ENCODE measurements at regions of chr17 and their contacts with region 1.

Region 1: GRCh38 chr17:40559954-40560591 is 5.2 kb downstream of the CCR7 start:
- DNase-seq: peak; percentile 88
- ATAC-seq: peak; percentile 46
- H3K4me3 ChIP-seq: peak overlapping the region; percentile 34 to 90 (median 83)
- H3K4me3 Mint-ChIP-seq: peak overlapping the region; percentile 92
- H3K27ac ChIP-seq: peak overlapping the region; percentile 90 to 98
- H3K27ac Mint-ChIP-seq: peak overlapping the region; percentile 94
- H3K4me1 ChIP-seq: peaks cover 79 to 99% of the 10 kb centered on the region in 2 donors
- H3K4me1 Mint-ChIP-seq: peaks cover 79% of the 10 kb centered on the region
- H3K27me3 ChIP-seq: no peaks in the 10 kb centered on the region
- H3K27me3 Mint-ChIP-seq: no peaks in the 10 kb centered on the region
- CTCF ChIP-seq: peak; percentile 97

Region 2: GRCh38 chr17:40362696-40363110 is 197.4 kb before region 1 on chr17:
- CTCF ChIA-PET with region 1: interaction called, 12 read pairs
- POLR2A ChIA-PET with region 1: interaction called, 3 read pairs
- intact Hi-C with region 1: loop called (anchors 1 kb)
- DNase-seq: peak; percentile 86
- ATAC-seq: peak; percentile 80
- H3K4me3 ChIP-seq: peak overlapping the region in 4 of 5 experiments; percentile 28 to 58 (median 52)
- H3K4me3 Mint-ChIP-seq: peak overlapping the region; percentile 85
- H3K27ac ChIP-seq: no peak overlapping the region
- H3K27ac Mint-ChIP-seq: peak overlapping the region; percentile 34
- H3K4me1 ChIP-seq: peaks cover 15 to 17% of the 10 kb centered on the region in 2 donors
- H3K4me1 Mint-ChIP-seq: peaks cover 12% of the 10 kb centered on the region
- H3K27me3 ChIP-seq: peaks cover 0 to 34% (median 8%) of the 10 kb centered on the region in 4 experiments
- H3K27me3 Mint-ChIP-seq: peaks cover 12% of the 10 kb centered on the region
- CTCF ChIP-seq: peak; percentile 70

Region 3: GRCh38 chr17:40443583-40444327 is 116.3 kb before region 1 on chr17:
- CTCF ChIA-PET with region 1: interaction called, 49 read pairs
- POLR2A ChIA-PET with region 1: interaction called, 5 read pairs
- intact Hi-C with region 1: loop called (anchors 1 kb)
- DNase-seq: peak; percentile 83
- ATAC-seq: peak; percentile 80
- H3K4me3 ChIP-seq: peak overlapping the region; percentile 28 to 66 (median 48)
- H3K4me3 Mint-ChIP-seq: peak overlapping the region; percentile 88
- H3K27ac ChIP-seq: peak overlapping the region in 1 of 2 donors; percentile 62
- H3K27ac Mint-ChIP-seq: peak overlapping the region; percentile 84
- H3K4me1 ChIP-seq: peaks cover 29 to 44% of the 10 kb centered on the region in 2 donors
- H3K4me1 Mint-ChIP-seq: peaks cover 46% of the 10 kb centered on the region
- H3K27me3 ChIP-seq: peaks cover 0 to 6% (median 0%) of the 10 kb centered on the region in 4 experiments
- H3K27me3 Mint-ChIP-seq: no peaks in the 10 kb centered on the region
- CTCF ChIP-seq: peak; percentile 47

Region 4: DNA sequence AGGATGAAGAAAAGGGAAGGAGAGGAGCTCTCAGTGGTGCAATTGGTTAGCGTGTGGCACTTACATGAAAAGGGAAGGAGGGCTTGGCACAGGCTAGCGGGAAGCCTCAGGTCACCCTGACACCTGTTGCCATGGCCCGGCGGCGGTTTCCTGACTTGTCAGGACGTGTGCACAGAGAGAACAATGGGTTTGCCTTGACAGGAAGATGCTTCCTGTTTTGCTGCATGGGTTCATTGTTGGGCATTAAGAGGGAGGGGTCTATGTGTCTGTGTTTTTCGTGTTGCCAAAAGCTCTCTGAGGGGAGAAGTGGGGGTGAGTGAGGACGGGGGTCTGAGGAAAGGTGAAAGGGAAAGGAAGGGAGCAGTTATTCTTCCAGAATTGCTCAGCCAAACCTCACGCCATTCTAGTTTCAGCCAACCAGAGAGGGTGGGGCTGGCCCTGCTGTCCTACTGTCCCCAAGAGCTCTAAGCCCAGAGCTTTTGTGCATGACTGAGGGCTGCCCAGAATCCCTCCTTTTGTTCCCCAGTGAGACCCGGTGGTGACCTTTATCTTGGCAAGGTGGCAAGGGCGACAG is 22.3 kb after region 1 on chr17:
- CTCF ChIA-PET with region 1: interaction called, 51 read pairs
- POLR2A ChIA-PET with region 1: interaction called, 11 read pairs
- intact Hi-C with region 1: loop called (anchors 1 kb)
- DNase-seq: peak; percentile 84
- ATAC-seq: peak; percentile 76
- H3K4me3 ChIP-seq: peak overlapping the region in 3 of 5 experiments; percentile 15 to 52 (median 40)
- H3K4me3 Mint-ChIP-seq: peak overlapping the region; percentile 68
- H3K27ac ChIP-seq: peak overlapping the region; percentile 85 to 87
- H3K27ac Mint-ChIP-seq: peak overlapping the region; percentile 77
- H3K4me1 ChIP-seq: peaks cover 66 to 68% of the 10 kb centered on the region in 2 donors
- H3K4me1 Mint-ChIP-seq: peaks cover 83% of the 10 kb centered on the region
- H3K27me3 ChIP-seq: no peaks in the 10 kb centered on the region
- H3K27me3 Mint-ChIP-seq: no peaks in the 10 kb centered on the region
- CTCF ChIP-seq: no peak

Region 5: GRCh38 chr17:40647624-40648383 is 87.7 kb after region 1 on chr17 and contains the start of gene SMARCE1:
- CTCF ChIA-PET with region 1: interaction called, 6 read pairs
- POLR2A ChIA-PET with region 1: interaction called, 5 read pairs
- intact Hi-C with region 1: loop called (anchors 1 kb)
- DNase-seq: peak; percentile 94
- ATAC-seq: peak; percentile 85
- H3K4me3 ChIP-seq: peak within 1 kb of the TSS; percentile 85 to 94 (median 86)
- H3K4me3 Mint-ChIP-seq: peak within 1 kb of the TSS; percentile 89
- H3K27ac ChIP-seq: peak within 1 kb of the TSS; percentile 97 to 100
- H3K27ac Mint-ChIP-seq: peak within 1 kb of the TSS; percentile 94
- H3K4me1 ChIP-seq: peaks cover 25 to 30% of the 10 kb centered on the region in 2 donors
- H3K4me1 Mint-ChIP-seq: peaks cover 38% of the 10 kb centered on the region
- H3K27me3 ChIP-seq: no peaks in the 10 kb centered on the region
- H3K27me3 Mint-ChIP-seq: no peaks in the 10 kb centered on the region
- CTCF ChIP-seq: no peak
- total RNA-seq, gene SMARCE1: 123 and 128 TPM in 2 replicates

Region 6: DNA sequence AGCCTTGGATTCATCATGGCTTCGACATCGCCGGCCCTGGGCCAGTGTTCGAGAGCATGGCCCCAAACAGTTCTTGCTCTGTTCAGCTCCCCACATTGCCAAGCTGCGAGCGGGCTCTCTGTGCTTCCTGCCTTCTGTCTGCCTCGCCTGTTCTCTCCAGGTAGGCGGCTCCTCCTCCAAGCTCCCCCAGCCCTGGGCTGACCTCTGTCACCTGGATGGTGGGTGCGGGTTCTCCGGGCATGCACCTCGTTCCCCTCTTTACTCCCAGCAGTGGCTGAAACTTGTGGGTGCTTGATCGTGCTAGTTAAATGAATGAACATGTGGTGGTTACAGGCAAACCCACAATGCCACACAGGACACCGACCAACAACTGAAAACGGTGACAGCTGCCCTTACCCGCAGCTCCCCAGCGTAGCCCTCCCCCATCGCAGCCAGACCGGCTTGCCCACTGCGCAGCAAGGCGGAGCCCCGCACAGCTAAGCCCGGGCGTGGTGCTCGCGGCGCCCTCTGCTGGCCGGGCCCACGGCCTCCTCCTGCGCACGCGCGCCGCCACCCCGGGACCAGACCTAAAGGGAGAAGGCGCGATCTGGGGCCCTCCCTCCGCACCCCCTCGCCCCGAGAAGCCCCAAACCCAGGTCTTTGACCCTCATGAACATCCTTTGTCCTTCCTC is 1105.6 kb after region 1 on chr17:
- CTCF ChIA-PET with region 1: interaction called, 8 read pairs
- POLR2A ChIA-PET with region 1: interaction called, 5 read pairs
- intact Hi-C with region 1: loop called (anchors 5 kb)
- DNase-seq: peak; percentile 96
- ATAC-seq: peak; percentile 72
- H3K4me3 ChIP-seq: peak overlapping the region; percentile 30 to 89 (median 62)
- H3K4me3 Mint-ChIP-seq: peak overlapping the region; percentile 94
- H3K27ac ChIP-seq: peak overlapping the region; percentile 99
- H3K27ac Mint-ChIP-seq: peak overlapping the region; percentile 99
- H3K4me1 ChIP-seq: peaks cover 12 to 41% of the 10 kb centered on the region in 2 donors
- H3K4me1 Mint-ChIP-seq: peaks cover 38% of the 10 kb centered on the region
- H3K27me3 ChIP-seq: no peaks in the 10 kb centered on the region
- H3K27me3 Mint-ChIP-seq: no peaks in the 10 kb centered on the region
- CTCF ChIP-seq: peak; percentile 96